ENCODE measurements at regions of chrX and their contacts with region 1.

Region 1: DNA sequence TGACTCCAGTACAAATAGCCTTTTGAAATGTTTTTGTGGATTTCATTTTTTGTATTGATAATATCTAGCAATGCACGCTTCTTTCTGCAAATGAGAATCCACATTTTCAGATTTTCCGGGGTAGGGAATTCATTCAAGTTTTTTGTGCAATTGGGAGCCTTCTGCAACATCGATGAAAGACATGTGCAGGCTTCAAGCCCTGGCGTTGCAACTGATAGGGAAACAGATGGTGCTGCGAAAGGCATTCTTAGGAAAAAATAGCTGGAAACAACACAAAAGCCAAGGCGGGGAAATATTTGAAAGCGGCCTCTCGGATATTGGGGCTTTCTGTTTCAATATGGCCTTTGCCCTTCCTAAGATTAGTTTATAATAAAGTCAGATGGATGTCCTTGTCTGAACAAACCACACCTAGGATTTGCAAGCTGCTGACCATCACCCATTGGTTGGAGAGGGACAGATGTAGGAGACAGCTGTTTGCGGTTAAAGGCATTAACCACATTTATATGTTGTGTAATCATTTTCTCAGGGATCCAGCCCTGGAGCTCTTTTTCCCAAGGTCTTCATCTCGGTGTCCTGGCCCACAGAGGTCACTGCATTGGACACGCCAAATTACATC is 136.5 kb downstream of the PRKX start:
- DNase-seq: no peak
- ATAC-seq: peak in 1 of 4 donors; percentile 13
- H3K4me3 ChIP-seq: no peak overlapping the region
- H3K27ac ChIP-seq: no peak overlapping the region
- H3K4me1 ChIP-seq: no peaks in the 10 kb centered on the region
- H3K27me3 ChIP-seq: no peaks in the 10 kb centered on the region
- CTCF ChIP-seq: no peak

Region 2: GRCh38 chrX:3415011-3415410 is 162.0 kb before region 1 on chrX:
- intact Hi-C with region 1: no loop called
- DNase-seq: no peak
- ATAC-seq: no peak
- H3K4me3 ChIP-seq: no peak overlapping the region
- H3K27ac ChIP-seq: no peak overlapping the region
- H3K4me1 ChIP-seq: no peaks in the 10 kb centered on the region
- H3K27me3 ChIP-seq: no peaks in the 10 kb centered on the region
- CTCF ChIP-seq: no peak

Region 3: DNA sequence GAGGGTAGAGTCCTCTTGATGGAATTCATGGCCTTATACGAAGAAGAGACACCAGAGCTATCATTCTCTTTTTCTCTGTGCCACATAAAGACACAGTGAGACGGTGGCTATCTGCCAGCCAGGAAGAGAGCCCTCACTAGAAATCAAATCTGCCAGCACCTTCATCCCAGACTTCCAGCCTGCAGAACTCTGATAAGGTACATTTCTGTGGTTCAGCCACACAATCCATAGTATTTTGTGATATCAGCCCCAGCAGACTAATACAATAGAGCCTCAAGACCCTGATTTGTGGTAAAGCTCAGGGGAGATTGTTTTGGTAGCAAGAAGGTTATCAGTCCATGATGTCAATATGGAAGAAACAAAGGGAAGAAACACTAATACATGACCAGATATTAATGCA is 1438.5 kb after region 1 on chrX:
- intact Hi-C with region 1: loop called in 1 of 2 experiments (anchors 5 kb)
- DNase-seq: no peak
- ATAC-seq: no peak
- H3K4me3 ChIP-seq: no peak overlapping the region
- H3K27ac ChIP-seq: no peak overlapping the region
- H3K4me1 ChIP-seq: no peaks in the 10 kb centered on the region
- H3K27me3 ChIP-seq: no peaks in the 10 kb centered on the region
- CTCF ChIP-seq: no peak

Measured in psoas muscle (tissue), 8 donors.